KBM-7 (cell line): ENCODE measurements at regions of chr20 and their contacts with region 1.

Region 1: GRCh38 chr20:25042531-25043498 is 15.1 kb downstream of the ACSS1 start:
- DNase-seq: peak; percentile 93

Region 2: DNA sequence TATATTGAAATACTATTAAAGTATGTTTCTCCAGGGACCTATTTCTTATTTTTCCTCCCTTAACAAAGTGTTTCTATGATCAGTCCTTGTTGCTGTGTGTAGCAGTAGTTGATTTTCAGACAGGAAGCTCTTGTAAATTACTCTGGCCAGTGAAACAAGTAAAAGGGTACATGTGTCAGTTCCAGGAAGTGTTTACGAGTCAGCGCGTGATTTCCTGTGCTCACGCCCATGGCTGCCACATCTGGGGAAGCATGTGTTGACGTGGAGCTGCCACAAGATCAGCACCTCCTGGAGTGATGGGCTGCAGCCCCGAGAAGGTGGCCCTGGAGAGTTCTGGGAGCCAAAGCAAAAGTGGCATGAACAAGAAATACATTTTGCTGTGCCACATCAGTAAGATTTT is 1015.6 kb before region 1 on chr20:
- in situ Hi-C with region 1: no loop called
- DNase-seq: peak; percentile 26

Region 3: DNA sequence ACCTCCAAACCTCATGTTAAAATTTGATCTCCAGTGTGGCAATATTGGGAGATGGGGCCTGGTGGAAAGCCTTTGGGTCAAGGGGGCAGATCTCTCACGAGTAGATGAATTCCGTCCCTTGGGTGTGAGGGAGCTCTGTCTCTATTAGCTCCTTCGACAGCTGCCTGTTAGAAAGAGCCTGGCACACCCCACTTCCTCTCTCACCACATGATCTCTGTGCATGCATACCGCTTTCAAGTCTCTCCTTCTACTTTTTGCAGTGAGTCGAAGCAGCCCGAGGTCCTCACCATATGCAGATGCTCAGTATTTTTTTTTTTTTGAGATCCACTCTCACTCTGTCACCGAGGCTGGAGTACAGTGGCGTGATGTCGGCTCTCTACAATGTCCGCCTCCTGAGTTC is 396.5 kb before region 1 on chr20:
- in situ Hi-C with region 1: no loop called
- DNase-seq: no peak

Region 4: DNA sequence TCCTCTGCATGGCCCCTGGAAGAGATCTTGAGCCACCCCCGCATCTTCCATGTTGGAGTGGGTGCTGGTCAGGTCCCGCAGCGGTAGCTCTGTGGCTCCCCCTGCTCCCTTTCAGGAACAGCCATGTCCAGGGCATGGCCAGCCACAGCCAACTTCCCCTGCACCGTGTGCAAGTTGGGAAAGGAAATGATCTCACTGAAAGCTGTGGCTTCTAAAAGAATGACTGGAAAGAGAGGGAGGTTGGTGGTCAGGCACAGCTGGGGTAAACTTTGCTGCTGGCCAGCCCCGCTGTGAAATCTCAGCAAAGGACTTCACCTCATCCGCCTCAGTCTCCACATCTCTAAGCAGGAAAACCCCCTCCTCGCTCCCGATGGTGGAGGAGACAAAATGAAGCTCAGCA is 247.4 kb before region 1 on chr20:
- in situ Hi-C with region 1: no loop called
- DNase-seq: no peak

Region 5: DNA sequence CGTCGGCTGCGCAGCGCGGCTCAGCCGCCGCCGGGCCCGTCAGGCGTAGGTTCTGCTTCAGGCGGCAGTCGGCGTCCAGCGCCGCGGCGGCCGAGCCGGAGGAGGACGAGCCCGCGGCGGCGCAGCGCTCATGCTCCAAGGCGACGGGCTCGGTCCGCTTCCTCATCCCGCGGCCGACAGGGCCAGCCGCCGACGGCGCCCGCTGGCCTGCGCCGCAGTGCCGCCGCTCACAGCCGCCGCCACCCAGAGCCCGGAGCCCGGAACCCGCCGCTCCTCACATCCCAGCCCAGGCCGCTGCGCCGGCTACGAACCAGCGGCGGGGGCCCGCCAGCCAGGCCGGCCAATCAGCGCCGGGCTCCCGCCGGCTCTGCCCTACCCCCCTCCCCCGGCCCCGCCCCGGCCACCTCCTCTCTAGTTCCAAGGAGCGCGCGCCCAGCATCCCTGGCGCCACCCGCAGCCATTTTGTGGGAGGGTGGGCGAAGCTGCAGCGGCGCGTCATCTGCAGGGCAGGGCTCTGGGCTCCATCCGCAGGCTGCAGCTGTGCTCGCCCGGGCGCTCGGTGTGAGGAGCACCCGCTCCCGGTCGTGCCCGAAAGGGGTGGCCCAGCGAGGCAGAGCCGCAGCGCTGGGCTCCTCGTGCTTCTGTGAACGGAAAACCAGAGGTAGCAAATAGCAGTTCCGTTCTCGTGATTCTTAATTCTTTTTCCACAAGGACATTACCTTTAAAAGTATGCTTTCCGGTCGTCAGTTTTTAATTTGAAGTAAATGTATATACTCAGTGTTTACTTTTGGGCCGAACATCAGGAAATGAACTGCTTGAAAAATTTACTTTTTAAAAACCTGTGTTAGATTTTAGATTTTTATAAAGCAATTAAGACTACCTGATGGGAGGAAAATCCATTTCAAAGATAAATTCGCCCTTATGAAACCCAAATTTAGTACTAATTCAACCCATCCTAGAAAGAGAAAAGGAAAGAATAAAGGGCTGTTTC is 348.0 kb after region 1 on chr20 and contains the start of gene ABHD12:
- in situ Hi-C with region 1: loop called (anchors 25 kb)
- DNase-seq: peak; percentile 94

Region 6: DNA sequence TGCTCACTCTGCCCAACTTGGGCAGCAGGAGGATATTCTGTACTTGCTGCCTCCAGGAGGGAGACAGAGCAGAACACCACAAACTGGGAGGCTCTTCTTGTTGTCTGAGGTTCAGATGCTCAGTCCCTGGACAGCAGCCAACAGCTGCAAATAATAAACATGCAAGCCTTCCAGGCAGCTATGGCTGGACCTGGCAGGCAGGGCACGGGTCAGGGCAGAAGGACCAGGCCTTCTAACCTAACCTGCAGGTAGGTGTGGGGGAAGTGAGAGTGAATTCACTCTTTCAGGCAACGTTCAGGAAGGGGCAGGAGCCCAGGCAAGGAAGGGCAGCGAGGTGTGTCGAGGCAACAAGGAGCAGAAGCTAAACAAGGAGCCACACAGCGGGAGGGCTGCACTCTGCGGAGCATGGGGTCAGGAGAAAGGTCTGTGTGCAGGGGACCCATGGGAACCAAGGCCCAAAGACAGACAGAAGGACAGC is 511.0 kb after region 1 on chr20:
- in situ Hi-C with region 1: no loop called
- DNase-seq: no peak